Cardiac septum (tissue), 1 donor: ENCODE measurements at regions of chr3 and their contacts with region 1.

Region 1: DNA sequence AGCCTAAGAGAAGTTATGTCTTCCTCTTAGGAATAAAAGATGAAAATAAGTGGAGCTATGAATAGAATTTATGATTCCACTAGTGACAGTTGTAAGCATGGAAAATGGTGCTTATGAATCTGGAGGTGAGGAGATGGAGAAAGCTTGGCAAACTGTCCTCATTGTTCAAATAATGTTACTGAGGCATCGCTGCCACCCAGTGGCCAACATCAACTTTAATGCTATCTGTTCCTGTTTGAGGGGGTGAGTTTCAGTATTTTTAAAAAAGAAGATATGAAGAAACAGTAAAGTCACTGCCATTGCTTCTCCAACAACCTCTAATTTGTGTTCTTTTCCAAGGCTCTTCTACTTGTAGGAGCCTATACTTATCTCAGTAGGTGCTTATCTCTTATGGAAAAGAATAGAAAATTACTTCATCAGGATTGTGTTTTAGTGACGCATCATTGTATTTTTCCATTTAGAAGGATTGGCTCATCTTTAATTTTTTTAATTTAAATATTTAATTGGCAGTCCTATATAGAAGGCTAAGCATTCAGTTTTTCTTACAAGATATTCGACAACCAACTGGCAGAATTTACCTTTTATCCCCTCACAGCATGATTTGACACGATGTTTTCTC is 260.4 kb upstream of the P2RY1 start:
- DNase-seq: no peak

Region 2: DNA sequence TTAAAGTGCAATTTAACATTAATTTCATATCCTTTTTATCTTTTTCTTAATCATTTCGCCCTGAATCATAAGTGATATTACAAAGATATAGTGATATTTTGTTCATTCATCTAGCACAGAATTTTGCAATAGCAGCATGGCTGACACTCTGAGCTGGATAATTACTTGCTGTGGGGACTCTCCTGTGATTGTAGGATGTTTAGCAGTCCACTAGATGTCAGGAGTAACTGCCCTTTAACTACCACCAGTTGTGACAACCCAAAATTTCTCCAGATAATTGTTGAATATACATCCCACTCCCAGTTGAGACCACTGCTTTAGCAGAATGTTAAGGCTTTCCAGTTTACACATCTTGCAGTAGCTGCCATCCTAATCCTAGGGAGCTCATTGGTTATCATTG is 502.6 kb before region 1 on chr3:
- intact Hi-C with region 1: loop called (anchors 5 kb)
- DNase-seq: no peak

Region 3: DNA sequence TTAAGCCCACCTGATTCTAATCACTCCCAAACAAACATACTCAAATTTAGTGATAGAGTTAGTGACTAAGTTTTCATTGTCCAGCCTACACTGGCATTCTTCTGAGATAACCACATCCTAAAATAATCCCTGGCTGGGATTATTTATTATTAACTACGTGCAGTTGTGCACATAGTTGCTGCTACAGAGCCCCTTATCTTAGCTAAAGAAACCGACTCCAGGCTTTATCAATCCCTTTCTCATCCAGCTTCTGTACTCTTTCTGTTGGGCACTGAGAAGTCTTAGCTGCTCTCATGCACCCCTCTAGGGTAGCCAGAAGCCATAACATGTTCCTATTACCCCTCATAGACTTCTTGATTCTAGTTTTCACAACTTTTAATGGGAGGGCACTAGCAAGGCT is 97.1 kb before region 1 on chr3:
- intact Hi-C with region 1: loop called (anchors 2 kb)
- DNase-seq: no peak

Region 4: GRCh38 chr3:152508705-152509104 is 65.9 kb before region 1 on chr3:
- intact Hi-C with region 1: loop called (anchors 5 kb)
- DNase-seq: no peak

Region 5: DNA sequence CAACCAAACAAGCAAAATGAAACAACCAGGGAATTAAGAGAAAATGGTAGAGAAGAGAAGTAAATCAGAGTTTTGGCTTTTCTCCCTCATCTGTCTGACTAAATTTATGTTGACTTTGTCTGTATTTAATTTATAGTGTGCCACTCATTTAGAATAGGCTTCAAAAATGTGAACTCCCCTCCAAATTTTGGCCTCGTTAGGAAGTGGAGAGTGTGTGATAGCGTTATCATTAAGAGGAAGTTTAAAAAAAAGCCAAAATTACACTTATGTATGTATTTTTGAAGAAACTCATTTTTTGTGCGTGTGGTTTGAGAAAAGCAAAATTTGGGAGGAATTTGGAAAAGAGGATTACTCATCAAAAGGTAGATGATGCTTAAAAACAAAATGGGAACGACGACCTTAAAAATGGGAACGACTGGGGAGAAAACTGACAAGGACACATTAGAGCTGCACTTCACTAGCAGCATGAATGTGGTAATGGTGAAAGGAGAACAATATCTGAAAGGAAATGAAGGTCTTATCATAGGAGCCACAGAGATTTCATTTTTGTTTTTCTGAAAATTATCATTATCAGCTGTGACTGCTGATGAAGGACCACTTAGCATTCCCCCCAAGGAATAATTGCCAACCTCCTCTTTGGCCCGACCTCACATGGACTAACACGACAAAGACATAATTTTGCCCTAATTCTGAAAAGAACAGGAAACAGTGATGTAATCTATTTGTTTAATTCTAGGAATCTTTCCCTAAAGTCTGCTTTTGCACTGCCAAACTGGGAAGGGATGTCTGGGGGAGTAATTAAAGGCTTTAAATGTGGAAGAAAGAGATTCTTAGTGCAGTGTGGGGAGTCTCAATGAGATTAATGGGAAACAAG is 97.1 kb after region 1 on chr3:
- intact Hi-C with region 1: no loop called
- DNase-seq: no peak